PC-9 (cell line): ENCODE measurements at regions of chr3 and their contacts with region 1.

Region 1: DNA sequence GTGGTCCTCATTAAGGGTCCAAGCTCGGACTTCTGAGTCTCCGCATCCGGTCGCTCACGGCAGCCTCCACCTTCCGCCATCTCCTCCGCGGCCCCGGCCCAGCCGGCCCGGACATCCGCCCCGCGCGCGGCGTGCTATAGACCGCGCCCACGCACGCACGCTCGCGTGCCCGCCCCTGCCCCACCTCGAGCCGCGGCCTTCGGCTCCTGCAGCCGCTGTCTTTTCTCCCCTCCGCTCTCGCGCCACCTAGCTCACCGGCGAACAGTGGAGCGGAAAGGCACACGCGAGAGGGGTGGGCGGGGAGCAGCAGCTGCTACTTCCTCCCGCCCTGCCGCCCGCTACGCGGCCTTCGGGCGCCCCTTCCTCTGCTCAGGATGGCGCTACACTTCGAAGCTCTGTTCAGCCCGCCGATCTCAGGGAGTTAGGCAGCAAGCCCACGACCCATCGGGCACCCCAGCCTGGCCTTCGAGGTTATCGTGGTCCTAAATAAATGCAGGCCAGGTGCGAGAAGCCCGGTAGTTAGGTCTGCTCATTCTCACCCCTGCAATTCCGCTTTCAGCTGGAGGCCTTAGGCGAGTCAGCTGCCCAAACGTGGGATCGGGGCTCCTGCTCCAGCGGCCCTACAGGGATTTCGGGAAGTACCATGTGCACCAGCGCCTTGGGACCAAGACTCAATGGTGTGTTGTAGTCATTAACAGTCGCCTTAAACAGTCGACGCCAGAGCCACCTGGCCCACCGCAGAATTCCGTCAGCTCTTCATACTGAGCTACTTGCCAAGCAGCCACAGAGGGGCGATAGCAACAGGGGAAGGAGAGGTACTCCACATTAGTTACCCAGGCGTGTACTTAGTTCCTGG is at the start of gene USP4:
- DNase-seq: peak; percentile 81 to 90
- H3K4me3 ChIP-seq: peak within 1 kb of the TSS; percentile 88
- H3K27ac ChIP-seq: peak within 1 kb of the TSS; percentile 77
- H3K4me1 ChIP-seq: peaks cover 8% of the 10 kb centered on the region; the same call in 1 of the 2 replicates
- H3K27me3 ChIP-seq: no peaks in the 10 kb centered on the region
- CTCF ChIP-seq: peak; percentile 42; the same call in 1 of the 2 replicates
- total RNA-seq, gene USP4: 39.8 and 42.9 TPM in 2 replicates

Region 2: GRCh38 chr3:49133226-49133951 is 206.8 kb before region 1 on chr3:
- CTCF ChIA-PET with region 1: interaction called, 10 read pairs
- POLR2A ChIA-PET with region 1: no interaction called
- intact Hi-C with region 1: no loop called
- DNase-seq: peak; percentile 71 to 85
- H3K4me3 ChIP-seq: peak overlapping the region; percentile 78
- H3K27ac ChIP-seq: peak overlapping the region; percentile 92
- H3K4me1 ChIP-seq: peaks cover 19% of the 10 kb centered on the region
- H3K27me3 ChIP-seq: no peaks in the 10 kb centered on the region
- CTCF ChIP-seq: no peak

Region 3: GRCh38 chr3:49255112-49255511 is 85.1 kb before region 1 on chr3:
- CTCF ChIA-PET with region 1: no interaction called
- POLR2A ChIA-PET with region 1: no interaction called
- intact Hi-C with region 1: no loop called
- DNase-seq: no peak
- H3K4me3 ChIP-seq: no peak overlapping the region
- H3K27ac ChIP-seq: no peak overlapping the region
- H3K4me1 ChIP-seq: peaks cover 9% of the 10 kb centered on the region
- H3K27me3 ChIP-seq: no peaks in the 10 kb centered on the region
- CTCF ChIP-seq: no peak

Region 4: DNA sequence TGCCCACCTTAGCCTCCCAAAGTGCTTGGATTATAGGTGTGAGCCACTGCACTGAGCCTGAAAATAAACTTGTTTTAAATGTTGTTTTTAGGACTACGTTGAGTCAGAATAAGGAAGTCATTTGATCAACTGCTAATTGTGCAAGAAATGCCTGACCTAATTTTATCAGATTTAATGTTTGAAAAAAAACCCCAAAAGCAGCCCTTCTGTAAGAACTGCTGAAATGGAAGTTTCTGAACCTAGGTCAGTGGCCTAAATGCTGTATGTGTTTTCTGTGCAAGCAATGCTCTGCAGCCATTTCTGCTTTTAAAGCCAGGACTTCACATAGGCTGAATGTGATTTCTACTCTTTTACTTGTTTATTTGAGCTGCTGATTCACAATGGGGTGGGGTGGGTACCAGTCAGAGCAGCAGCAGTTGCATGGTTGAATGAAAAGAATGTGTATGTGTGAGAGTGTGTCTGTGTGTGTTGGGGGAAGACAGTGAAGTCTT is 11.4 kb after region 1 on chr3:
- CTCF ChIA-PET with region 1: no interaction called
- POLR2A ChIA-PET with region 1: interaction called, 11 read pairs
- intact Hi-C with region 1: no loop called
- DNase-seq: peak; percentile 53 to 88
- H3K4me3 ChIP-seq: no peak overlapping the region; the same call in 1 of the 2 replicates
- H3K27ac ChIP-seq: peak overlapping the region; percentile 81
- H3K4me1 ChIP-seq: peaks cover 69% of the 10 kb centered on the region
- H3K27me3 ChIP-seq: no peaks in the 10 kb centered on the region
- CTCF ChIP-seq: no peak

Region 5: GRCh38 chr3:49358217-49358883 is 18.2 kb after region 1 on chr3 and contains the start of gene GPX1:
- CTCF ChIA-PET with region 1: interaction called, 4 read pairs
- POLR2A ChIA-PET with region 1: interaction called, 19 read pairs
- intact Hi-C with region 1: loop called (anchors 1 kb)
- DNase-seq: peak; percentile 82 to 97
- H3K4me3 ChIP-seq: peak within 1 kb of the TSS; percentile 80
- H3K27ac ChIP-seq: peak within 1 kb of the TSS; percentile 77
- H3K4me1 ChIP-seq: peaks cover 28% of the 10 kb centered on the region
- H3K27me3 ChIP-seq: no peaks in the 10 kb centered on the region
- CTCF ChIP-seq: no peak
- total RNA-seq, gene GPX1: 386 and 394 TPM in 2 replicates

Region 6: GRCh38 chr3:49387721-49388120 is 47.5 kb after region 1 on chr3:
- CTCF ChIA-PET with region 1: no interaction called
- POLR2A ChIA-PET with region 1: no interaction called
- intact Hi-C with region 1: no loop called
- DNase-seq: no peak
- H3K4me3 ChIP-seq: no peak overlapping the region
- H3K27ac ChIP-seq: no peak overlapping the region
- H3K4me1 ChIP-seq: no peaks in the 10 kb centered on the region
- H3K27me3 ChIP-seq: no peaks in the 10 kb centered on the region
- CTCF ChIP-seq: no peak

Region 7: GRCh38 chr3:49411968-49412631 is 71.9 kb after region 1 on chr3 and contains the starts of genes RHOA and TCTA:
- CTCF ChIA-PET with region 1: interaction called, 4 read pairs
- POLR2A ChIA-PET with region 1: interaction called, 16 read pairs
- intact Hi-C with region 1: loop called (anchors 1 kb)
- DNase-seq: peak; percentile 97
- H3K4me3 ChIP-seq: peak within 1 kb of the TSS; percentile 89
- H3K27ac ChIP-seq: peak within 1 kb of the TSS; percentile 63
- H3K4me1 ChIP-seq: peaks cover 36% of the 10 kb centered on the region
- H3K27me3 ChIP-seq: no peaks in the 10 kb centered on the region
- CTCF ChIP-seq: no peak
- total RNA-seq, gene RHOA: 413 and 416 TPM in 2 replicates
- total RNA-seq, gene TCTA: 17.0 and 17.2 TPM in 2 replicates